H1 (cell line): ENCODE measurements at regions of chr20 and their contacts with region 1.

Region 1: DNA sequence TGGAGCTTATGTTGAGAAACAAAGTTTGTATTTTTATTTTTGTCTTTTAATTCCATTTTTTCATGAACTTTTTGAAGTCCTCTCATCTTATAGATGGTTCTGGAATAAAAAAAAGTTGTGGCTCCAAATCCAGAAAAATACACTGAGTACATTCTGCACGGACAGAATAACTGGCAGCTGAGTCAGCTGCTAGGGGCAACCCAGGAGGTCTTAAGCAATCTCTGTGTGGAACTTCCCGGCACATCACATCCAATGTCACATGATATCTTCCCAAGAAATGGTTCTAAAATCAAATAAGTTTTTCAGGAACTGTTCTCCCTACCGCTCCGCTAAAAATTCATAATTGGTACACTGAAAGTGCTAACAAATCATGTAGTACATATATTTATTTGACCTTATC is 29.8 kb downstream of the SLC13A3 start:
- DNase-seq: no peak
- H3K4me3 ChIP-seq: no peak overlapping the region
- H3K27ac ChIP-seq: no peak overlapping the region
- H3K4me1 ChIP-seq: peaks cover 0 to 8% (median 3%) of the 10 kb centered on the region in 4 experiments; a peak in 3 of 7 replicates
- H3K27me3 ChIP-seq: no peaks in the 10 kb centered on the region
- CTCF ChIP-seq: no peak
- EP300 ChIP-seq: no peak
- POLR2A ChIP-seq: no peak
- RAD21 ChIP-seq: no peak

Region 2: DNA sequence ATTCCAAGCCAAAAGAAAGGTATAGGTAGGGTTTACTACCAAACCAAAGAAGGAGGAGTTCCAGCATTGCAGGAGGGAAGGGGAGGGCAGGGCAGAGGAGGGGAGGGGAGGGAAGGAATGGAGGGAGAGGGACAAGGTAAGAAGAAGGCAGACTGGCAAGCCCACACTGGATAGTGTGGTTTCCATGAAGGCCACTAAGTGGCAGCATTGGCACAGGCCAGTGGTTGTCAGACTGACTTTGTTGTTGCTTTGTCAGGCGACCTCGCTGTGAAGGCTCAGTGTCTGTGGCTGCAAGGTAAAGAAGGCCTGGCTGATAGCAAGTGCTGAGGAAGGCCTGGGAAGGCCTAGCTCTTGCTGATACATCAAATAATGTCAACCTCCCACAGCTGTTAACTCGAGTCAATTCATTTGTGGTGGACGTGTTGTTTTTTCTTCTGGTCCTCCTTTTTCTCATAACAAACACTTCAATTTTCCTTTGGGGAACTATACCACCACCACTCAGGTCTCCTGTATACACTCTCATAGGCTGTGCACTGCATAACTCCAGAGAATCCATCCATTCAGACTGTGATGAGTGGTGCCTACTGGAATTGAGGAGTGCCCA is 100.4 kb before region 1 on chr20:
- CTCF ChIA-PET with region 1: interaction called, 20 read pairs
- POLR2A ChIA-PET with region 1: no interaction called
- DNase-seq: peak; percentile 59 to 71
- H3K4me3 ChIP-seq: no peak overlapping the region
- H3K27ac ChIP-seq: no peak overlapping the region
- H3K4me1 ChIP-seq: no peaks in the 10 kb centered on the region; a peak in 1 of 7 replicates
- H3K27me3 ChIP-seq: no peaks in the 10 kb centered on the region
- CTCF ChIP-seq: peak; percentile 87 to 99 (median 91)
- EP300 ChIP-seq: no peak
- POLR2A ChIP-seq: no peak
- RAD21 ChIP-seq: peak; percentile 95 to 99

Region 3: GRCh38 chr20:46634528-46634927 is 13.0 kb after region 1 on chr20:
- CTCF ChIA-PET with region 1: interaction called, 14 read pairs
- POLR2A ChIA-PET with region 1: interaction called, 7 read pairs
- DNase-seq: no peak
- H3K4me3 ChIP-seq: no peak overlapping the region
- H3K27ac ChIP-seq: no peak overlapping the region
- H3K4me1 ChIP-seq: peaks cover 2 to 11% (median 7%) of the 10 kb centered on the region in 4 experiments; a peak in 6 of 7 replicates
- H3K27me3 ChIP-seq: no peaks in the 10 kb centered on the region
- CTCF ChIP-seq: no peak
- EP300 ChIP-seq: no peak
- POLR2A ChIP-seq: no peak
- RAD21 ChIP-seq: no peak

Region 4: DNA sequence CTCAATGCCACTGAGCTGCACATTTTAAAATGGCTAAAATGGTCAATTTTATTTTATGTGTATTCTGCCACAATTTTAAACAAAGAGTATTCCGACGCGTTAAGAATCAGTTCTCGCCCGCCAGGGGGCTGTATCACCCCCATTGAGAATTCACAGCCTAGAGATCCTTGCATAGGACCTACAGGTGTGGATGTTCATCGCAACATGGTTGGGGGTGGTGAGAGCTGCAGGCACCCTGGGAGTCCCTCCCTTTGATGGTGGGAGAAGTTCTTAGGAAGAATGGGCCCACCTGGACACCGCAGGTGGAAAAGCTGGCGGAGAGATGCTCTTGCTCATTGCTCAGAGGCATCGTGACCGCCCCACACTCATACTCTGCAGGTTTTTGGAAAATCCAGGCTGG is 151.4 kb after region 1 on chr20:
- CTCF ChIA-PET with region 1: no interaction called
- POLR2A ChIA-PET with region 1: no interaction called
- DNase-seq: no peak
- H3K4me3 ChIP-seq: no peak overlapping the region
- H3K27ac ChIP-seq: no peak overlapping the region
- H3K4me1 ChIP-seq: no peaks in the 10 kb centered on the region; a peak in 1 of 7 replicates
- H3K27me3 ChIP-seq: no peaks in the 10 kb centered on the region; a peak in 1 of 7 replicates
- CTCF ChIP-seq: peak in 2 of 3 experiments; percentile 18 to 25; a peak in 2 of 4 replicates
- EP300 ChIP-seq: no peak
- POLR2A ChIP-seq: no peak
- RAD21 ChIP-seq: peak; percentile 41 to 51